ENCODE measurements at regions of chr2 and their contacts with region 1.

Region 1: GRCh38 chr2:20212459-20212870 is 12.5 kb downstream of the SDC1 start:
- DNase-seq: peak in 1 of 5 donors; percentile 49
- ATAC-seq: peak in 1 of 4 donors; percentile 20
- H3K4me3 ChIP-seq: no peak overlapping the region
- H3K27ac ChIP-seq: no peak overlapping the region
- H3K4me1 ChIP-seq: no peaks in the 10 kb centered on the region
- H3K27me3 ChIP-seq: no peaks in the 10 kb centered on the region
- CTCF ChIP-seq: no peak
- POLR2A ChIP-seq: no peak

Region 2: GRCh38 chr2:19989681-19990415 is 222.6 kb before region 1 on chr2 and contains the start of gene WDR35:
- intact Hi-C with region 1: loop called in 1 of 10 experiments (anchors 10 kb)
- DNase-seq: peak; percentile 86 to 95 (median 91)
- ATAC-seq: peak; percentile 94 to 100 (median 99)
- H3K4me3 ChIP-seq: peak within 1 kb of the TSS; percentile 64 to 97 (median 70)
- H3K27ac ChIP-seq: peak within 1 kb of the TSS in 11 of 12 donors; percentile 25 to 72 (median 53)
- H3K4me1 ChIP-seq: peaks cover 0 to 20% (median 6%) of the 10 kb centered on the region in 12 donors
- H3K27me3 ChIP-seq: peaks cover 0 to 15% (median 0%) of the 10 kb centered on the region in 9 donors
- CTCF ChIP-seq: no peak
- POLR2A ChIP-seq: peak in 1 of 2 donors; percentile 68
- total RNA-seq, gene WDR35: 3.1 to 8.5 (median 5.1) TPM

Measured in heart left ventricle (tissue), 16 donors.